ENCODE measurements at regions of chr5 and their contacts with region 1.

Region 1: GRCh38 chr5:134101686-134102439 is 12.6 kb upstream of the TCF7 start:
- DNase-seq: peak; percentile 53 to 80
- ATAC-seq: peak; percentile 81 to 92
- H3K4me3 ChIP-seq: no peak overlapping the region
- H3K27ac ChIP-seq: no peak overlapping the region
- H3K4me1 ChIP-seq: peaks cover 18% of the 10 kb centered on the region
- CTCF ChIP-seq: peak; percentile 73
- EP300 ChIP-seq: no peak
- POLR2A ChIP-seq: no peak
- RAD21 ChIP-seq: peak; percentile 51 to 56; a peak in 4 of 5 replicates

Region 2: GRCh38 chr5:133232011-133232410 is 869.9 kb before region 1 on chr5:
- CTCF ChIA-PET with region 1: no interaction called
- POLR2A ChIA-PET with region 1: no interaction called
- DNase-seq: no peak
- ATAC-seq: no peak
- H3K4me3 ChIP-seq: no peak overlapping the region
- H3K27ac ChIP-seq: peak overlapping the region in 1 of 2 experiments; percentile 48; a peak in 3 of 6 replicates
- H3K4me1 ChIP-seq: peaks cover 25% of the 10 kb centered on the region
- CTCF ChIP-seq: no peak
- EP300 ChIP-seq: no peak
- POLR2A ChIP-seq: no peak
- RAD21 ChIP-seq: no peak

Region 3: GRCh38 chr5:134026521-134027268 is 75.2 kb before region 1 on chr5:
- CTCF ChIA-PET with region 1: interaction called, 15 read pairs
- POLR2A ChIA-PET with region 1: no interaction called
- DNase-seq: peak; percentile 86 to 94
- ATAC-seq: peak; percentile 95 to 97
- H3K4me3 ChIP-seq: no peak overlapping the region
- H3K27ac ChIP-seq: peak overlapping the region in 1 of 2 experiments; percentile 59; a peak in 3 of 6 replicates
- H3K4me1 ChIP-seq: peaks cover 32% of the 10 kb centered on the region
- CTCF ChIP-seq: peak; percentile 55
- EP300 ChIP-seq: no peak
- POLR2A ChIP-seq: no peak
- RAD21 ChIP-seq: peak; percentile 52 to 70

Region 4: DNA sequence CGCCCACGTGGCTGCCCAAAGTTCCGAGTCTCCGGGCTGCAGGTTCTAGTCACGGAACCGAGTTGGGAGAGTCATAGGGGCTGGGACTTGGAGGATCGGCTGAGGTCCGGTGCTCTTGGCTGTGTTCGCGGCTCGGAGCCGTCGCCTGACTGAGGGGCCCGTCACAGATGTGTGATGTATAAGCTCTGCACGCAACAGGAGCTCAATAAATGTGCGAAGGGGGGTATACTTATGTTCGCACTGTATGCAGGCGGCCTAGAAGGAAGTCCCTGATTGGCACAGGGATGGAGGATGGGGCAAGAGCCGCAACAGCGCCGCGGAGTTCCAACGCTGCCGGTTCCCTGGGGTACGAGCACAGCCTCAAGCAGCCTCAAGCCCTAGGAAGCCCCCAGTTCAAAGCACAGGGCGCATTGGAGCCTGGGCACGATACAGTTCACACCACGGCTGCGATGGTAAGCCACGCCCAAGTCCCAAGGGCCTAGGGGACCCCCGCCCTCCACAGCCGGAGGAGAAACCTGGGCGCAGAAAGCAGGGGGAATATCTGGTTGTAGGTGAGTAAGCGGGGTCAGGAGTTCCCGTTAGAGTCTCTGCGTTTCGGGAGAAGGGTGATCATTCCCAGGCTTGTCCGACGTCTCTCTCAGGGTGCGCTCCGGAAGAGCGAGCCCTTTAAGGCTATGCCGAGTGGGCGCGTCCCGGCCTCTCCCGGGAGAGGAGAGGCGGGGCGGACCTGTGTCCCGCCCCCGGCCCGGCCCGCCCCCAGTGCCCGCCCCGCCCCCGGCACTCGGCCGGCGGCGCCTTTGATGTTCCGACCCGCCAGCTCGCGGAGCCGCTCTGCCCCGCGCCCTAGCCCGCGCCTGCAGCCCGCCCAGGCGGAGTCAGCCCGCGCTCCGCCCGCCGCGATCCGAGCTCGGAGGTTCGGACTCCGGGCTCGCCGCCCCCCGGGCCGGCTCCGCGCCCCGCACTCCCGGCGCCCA is 12.3 kb after region 1 on chr5 and contains the start of gene TCF7:
- CTCF ChIA-PET with region 1: interaction called, 47 read pairs
- POLR2A ChIA-PET with region 1: no interaction called
- DNase-seq: peak; percentile 76 to 91
- ATAC-seq: peak; percentile 83 to 94
- H3K4me3 ChIP-seq: peak within 1 kb of the TSS; percentile 82
- H3K27ac ChIP-seq: peak within 1 kb of the TSS; percentile 69 to 87
- H3K4me1 ChIP-seq: peaks cover 4% of the 10 kb centered on the region; the same call in 1 of the 3 replicates
- CTCF ChIP-seq: no peak
- EP300 ChIP-seq: no peak
- POLR2A ChIP-seq: peak; percentile 58
- RAD21 ChIP-seq: no peak
- polyA plus RNA-seq, gene TCF7: 2.8 and 3.7 TPM in 2 replicates

Region 5: DNA sequence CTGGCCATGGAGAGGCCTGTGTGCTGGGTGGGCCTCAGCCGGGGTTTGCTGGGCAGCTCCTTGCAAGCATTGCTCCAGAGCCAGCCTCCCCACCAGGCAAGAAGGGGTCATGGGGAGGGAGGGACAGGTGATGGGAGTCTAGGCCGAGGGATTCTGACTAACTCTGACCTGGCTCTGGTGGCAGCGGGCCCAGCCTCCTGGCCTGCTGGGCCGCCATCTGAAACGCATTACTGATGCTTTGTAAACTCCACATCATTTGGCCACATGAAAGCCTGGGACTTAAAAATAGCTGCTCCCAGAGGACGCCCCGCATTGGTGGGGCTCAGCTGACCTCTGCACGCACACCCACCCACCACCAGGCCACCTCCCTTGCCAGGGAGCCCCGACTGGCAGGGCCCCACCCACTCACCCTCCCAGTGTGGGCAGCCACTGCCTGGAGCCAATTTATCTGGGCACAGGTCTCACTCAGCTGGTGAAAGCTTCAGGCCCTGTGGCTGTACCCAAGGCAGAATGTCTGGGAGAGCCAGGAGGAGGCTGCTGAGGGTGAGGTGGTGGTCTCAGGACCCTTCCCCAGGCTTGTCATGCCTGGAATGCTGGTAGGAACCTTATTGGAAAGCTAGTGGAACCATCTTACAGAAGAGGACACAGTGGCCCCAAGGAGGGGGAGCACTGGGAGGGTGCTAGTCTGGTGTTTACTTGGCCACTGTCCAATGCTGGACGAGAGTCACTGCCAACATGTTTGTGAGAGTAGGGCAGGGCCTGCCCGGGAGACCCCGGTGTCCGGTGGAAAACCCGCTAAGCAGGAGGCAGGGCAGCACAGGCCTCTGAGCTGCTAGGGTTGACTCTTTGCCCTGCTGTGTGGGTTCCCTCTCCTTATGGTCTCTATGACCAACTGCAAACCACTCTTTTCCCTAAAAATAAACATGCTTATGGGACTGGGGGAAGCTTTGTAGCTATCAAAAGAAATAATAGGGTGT is 23.5 kb after region 1 on chr5:
- CTCF ChIA-PET with region 1: interaction called, 13 read pairs
- POLR2A ChIA-PET with region 1: no interaction called
- DNase-seq: no peak
- ATAC-seq: peak; percentile 20 to 40; a peak in 4 of 6 replicates
- H3K4me3 ChIP-seq: no peak overlapping the region
- H3K27ac ChIP-seq: peak overlapping the region in 1 of 2 experiments; percentile 72; a peak in 4 of 6 replicates
- H3K4me1 ChIP-seq: peaks cover 18% of the 10 kb centered on the region
- CTCF ChIP-seq: no peak
- EP300 ChIP-seq: no peak
- POLR2A ChIP-seq: no peak
- RAD21 ChIP-seq: no peak

Region 6: GRCh38 chr5:134132372-134133034 is 30.6 kb after region 1 on chr5:
- CTCF ChIA-PET with region 1: interaction called, 18 read pairs
- POLR2A ChIA-PET with region 1: no interaction called
- DNase-seq: no peak
- ATAC-seq: no peak
- H3K4me3 ChIP-seq: no peak overlapping the region
- H3K27ac ChIP-seq: no peak overlapping the region
- H3K4me1 ChIP-seq: no peaks in the 10 kb centered on the region
- CTCF ChIP-seq: no peak
- EP300 ChIP-seq: no peak
- POLR2A ChIP-seq: no peak
- RAD21 ChIP-seq: no peak

Measured in A549 (cell line).